PC-3 (cell line): ENCODE measurements at regions of chr10 and their contacts with region 1.

Region 1: DNA sequence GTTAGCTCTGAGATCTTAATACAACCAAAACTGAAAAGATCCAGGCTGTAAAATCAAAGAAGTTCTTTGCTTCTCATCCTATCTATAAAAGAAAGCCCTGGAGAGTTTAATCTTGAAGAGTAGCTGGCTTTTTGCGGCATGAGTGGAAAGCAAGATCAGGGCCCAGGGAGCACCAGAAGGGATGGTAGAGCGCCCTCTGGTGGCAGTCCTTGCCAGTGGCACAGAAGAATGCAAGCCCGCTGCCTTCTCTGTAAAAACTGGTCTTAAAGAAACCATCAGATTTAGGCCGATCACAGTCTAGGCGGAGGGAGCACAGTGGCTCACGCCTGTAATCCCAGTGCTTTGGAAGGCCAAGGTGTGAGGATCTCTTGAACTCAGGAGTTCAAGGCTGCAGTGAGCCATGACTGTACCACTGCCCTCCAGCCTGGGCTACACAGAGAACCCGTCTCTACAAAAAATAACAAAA is 35.6 kb downstream of the CPN1 start:
- DNase-seq: peak; percentile 81
- ATAC-seq: peak; percentile 92
- H3K4me3 ChIP-seq: no peak overlapping the region
- H3K27ac ChIP-seq: no peak overlapping the region
- H3K4me1 ChIP-seq: 0 out of 2 replicates have a peak, but pooled peaks cover 7% of the 10 kb centered on the region
- H3K27me3 ChIP-seq: no peaks in the 10 kb centered on the region
- CTCF ChIP-seq: peak; percentile 81

Region 2: GRCh38 chr10:99976886-99977665 is 69.0 kb before region 1 on chr10:
- CTCF ChIA-PET with region 1: no interaction called
- POLR2A ChIA-PET with region 1: no interaction called
- intact Hi-C with region 1: loop called (anchors 2 kb)
- DNase-seq: peak; percentile 86
- ATAC-seq: peak; percentile 96
- H3K4me3 ChIP-seq: no peak overlapping the region
- H3K27ac ChIP-seq: peak overlapping the region; percentile 79
- H3K4me1 ChIP-seq: peaks cover 19% of the 10 kb centered on the region
- H3K27me3 ChIP-seq: no peaks in the 10 kb centered on the region
- CTCF ChIP-seq: no peak

Region 3: DNA sequence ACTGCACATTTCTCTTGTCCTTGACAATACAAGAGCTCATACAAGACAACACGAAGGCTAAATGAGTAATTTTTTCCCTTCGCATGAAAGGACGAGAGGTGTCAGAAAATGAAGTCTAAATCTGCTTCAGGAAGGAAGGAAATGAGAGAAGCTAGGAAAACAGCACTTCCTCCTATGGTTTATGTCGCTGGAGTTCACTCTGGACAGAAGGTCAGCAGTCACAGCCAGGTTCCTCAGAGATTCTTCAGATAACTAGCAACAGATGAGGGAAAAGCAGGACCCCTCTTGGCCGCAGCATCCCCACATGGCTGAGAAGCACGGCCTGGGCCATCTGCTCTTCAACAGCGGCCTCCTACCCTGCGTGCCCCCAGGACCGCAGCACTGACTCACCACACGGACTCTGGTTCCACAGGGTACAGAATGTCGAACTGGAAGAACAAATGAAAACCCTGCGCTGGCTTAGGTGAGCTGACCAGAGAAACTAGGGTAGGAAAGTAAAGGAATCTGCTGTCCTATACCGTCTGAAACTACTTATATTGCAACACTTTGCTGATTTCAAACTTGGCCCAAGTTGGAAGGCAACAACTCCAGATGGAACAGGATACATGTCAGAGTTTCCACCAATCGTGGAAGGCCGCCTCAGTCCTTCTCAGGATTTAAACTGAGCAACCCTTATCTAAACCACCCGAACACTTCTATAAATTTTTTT is 62.6 kb before region 1 on chr10:
- CTCF ChIA-PET with region 1: no interaction called
- POLR2A ChIA-PET with region 1: interaction called, 14 read pairs
- intact Hi-C with region 1: no loop called
- DNase-seq: no peak
- ATAC-seq: no peak; the same call in 1 of the 2 replicates
- H3K4me3 ChIP-seq: no peak overlapping the region
- H3K27ac ChIP-seq: peak overlapping the region; percentile 60
- H3K4me1 ChIP-seq: peaks cover 16% of the 10 kb centered on the region
- H3K27me3 ChIP-seq: no peaks in the 10 kb centered on the region
- CTCF ChIP-seq: no peak

Region 4: GRCh38 chr10:100065084-100065660 is 19.1 kb after region 1 on chr10:
- CTCF ChIA-PET with region 1: no interaction called
- POLR2A ChIA-PET with region 1: no interaction called
- intact Hi-C with region 1: no loop called
- DNase-seq: no peak
- ATAC-seq: no peak
- H3K4me3 ChIP-seq: no peak overlapping the region
- H3K27ac ChIP-seq: no peak overlapping the region
- H3K4me1 ChIP-seq: no peaks in the 10 kb centered on the region
- H3K27me3 ChIP-seq: no peaks in the 10 kb centered on the region
- CTCF ChIP-seq: no peak

Region 5: DNA sequence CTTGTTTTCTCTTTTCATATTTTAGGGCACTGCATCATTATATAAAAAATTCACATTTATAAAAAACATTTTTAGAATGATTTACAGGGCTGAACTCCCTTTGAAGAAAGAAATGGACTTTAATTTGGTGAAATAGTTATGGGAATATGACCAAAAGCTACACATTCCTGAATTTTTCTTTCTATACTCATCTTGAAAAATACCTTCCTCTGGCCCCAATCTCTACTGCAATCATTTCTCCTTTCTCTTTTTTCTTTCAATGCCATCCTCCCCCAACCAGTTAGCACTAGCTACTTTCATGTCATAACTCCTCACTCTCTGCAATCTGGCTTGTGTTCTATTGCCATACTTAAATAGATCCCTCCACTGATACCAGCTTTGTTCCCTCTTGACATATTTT is 422.9 kb after region 1 on chr10:
- CTCF ChIA-PET with region 1: no interaction called
- POLR2A ChIA-PET with region 1: no interaction called
- intact Hi-C with region 1: no loop called
- DNase-seq: no peak
- ATAC-seq: no peak
- H3K4me3 ChIP-seq: no peak overlapping the region
- H3K27ac ChIP-seq: no peak overlapping the region
- H3K4me1 ChIP-seq: no peaks in the 10 kb centered on the region
- H3K27me3 ChIP-seq: peaks cover 42% of the 10 kb centered on the region
- CTCF ChIP-seq: no peak